Dorsolateral prefrontal cortex (tissue), 120 donors: ENCODE measurements at regions of chr2 and their contacts with region 1.

Region 1: GRCh38 chr2:10109311-10109710 is 13.2 kb upstream of the RRM2 start:
- DNase-seq: no peak
- H3K4me3 ChIP-seq: no peak overlapping the region
- H3K27ac ChIP-seq: no peak overlapping the region
- H3K27me3 ChIP-seq: no peaks in the 10 kb centered on the region
- CTCF ChIP-seq: no peak

Region 2: DNA sequence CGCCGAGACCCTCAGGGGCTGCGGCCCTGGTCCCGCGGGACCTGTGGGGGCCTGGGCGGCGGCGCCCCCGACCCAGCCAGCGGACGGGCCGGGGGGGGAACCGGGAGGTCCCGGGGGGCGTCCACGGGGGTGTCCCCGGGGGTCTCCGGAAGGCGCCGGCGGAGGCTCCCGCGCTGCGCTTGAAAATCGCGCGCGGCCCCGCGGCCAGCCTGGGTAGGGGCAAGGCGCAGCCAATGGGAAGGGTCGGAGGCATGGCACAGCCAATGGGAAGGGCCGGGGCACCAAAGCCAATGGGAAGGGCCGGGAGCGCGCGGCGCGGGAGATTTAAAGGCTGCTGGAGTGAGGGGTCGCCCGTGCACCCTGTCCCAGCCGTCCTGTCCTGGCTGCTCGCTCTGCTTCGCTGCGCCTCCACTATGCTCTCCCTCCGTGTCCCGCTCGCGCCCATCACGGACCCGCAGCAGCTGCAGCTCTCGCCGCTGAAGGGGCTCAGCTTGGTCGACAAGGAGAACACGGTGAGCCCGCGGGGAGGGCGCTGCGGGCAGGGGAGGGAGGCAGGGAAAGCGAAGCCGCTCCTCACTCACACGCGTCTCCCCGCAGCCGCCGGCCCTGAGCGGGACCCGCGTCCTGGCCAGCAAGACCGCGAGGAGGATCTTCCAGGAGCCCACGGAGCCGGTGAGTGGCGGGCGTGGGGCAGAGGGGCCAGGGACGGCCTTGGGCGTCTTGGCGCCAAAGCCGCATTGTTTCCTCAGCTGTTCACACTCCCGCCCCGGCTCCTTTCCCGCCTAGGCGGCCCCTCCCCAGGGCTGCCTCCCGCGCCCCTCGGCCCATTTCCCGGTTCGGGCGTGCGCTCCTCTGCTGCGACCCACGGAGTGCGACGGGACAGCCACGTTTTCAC is 13.3 kb after region 1 on chr2 and contains the start of gene RRM2:
- intact Hi-C with region 1: loop called in 1 of 2 experiments (anchors 1 kb)
- DNase-seq: peak; percentile 87 to 95 (median 92)
- H3K4me3 ChIP-seq: peak within 1 kb of the TSS; percentile 41 to 78 (median 61)
- H3K27ac ChIP-seq: no peak within 1 kb of the TSS
- H3K27me3 ChIP-seq: peaks cover 0 to 31% (median 18%) of the 10 kb centered on the region in 45 donors
- CTCF ChIP-seq: peak in 8 of 56 donors; percentile 3 to 23 (median 12)
- total RNA-seq, gene RRM2: 0.11 to 3.3 (median 0.83) TPM in 45 of 120 experiments, not detected in the others